MCF 10A (cell line): ENCODE measurements at regions of chr11 and their contacts with region 1.

Region 1: GRCh38 chr11:56841210-56841810 is 92.8 kb upstream of the OR9G4 start:
- DNase-seq: peak; percentile 78
- H3K4me3 Mint-ChIP-seq: no peak overlapping the region
- H3K27ac Mint-ChIP-seq: no peak overlapping the region
- H3K4me1 Mint-ChIP-seq: peaks cover 21% of the 10 kb centered on the region
- H3K27me3 Mint-ChIP-seq: no peaks in the 10 kb centered on the region
- CTCF ChIP-seq: peak; percentile 79

Region 2: GRCh38 chr11:57072640-57073039 is 231.3 kb after region 1 on chr11:
- CTCF ChIA-PET with region 1: interaction called, 9 read pairs
- POLR2A ChIA-PET with region 1: interaction called, 6 read pairs
- intact Hi-C with region 1: loop called (anchors 5 kb)
- DNase-seq: peak; percentile 96
- H3K4me3 Mint-ChIP-seq: no peak overlapping the region
- H3K27ac Mint-ChIP-seq: peak overlapping the region; percentile 94
- H3K4me1 Mint-ChIP-seq: peaks cover 26% of the 10 kb centered on the region
- H3K27me3 Mint-ChIP-seq: no peaks in the 10 kb centered on the region
- CTCF ChIP-seq: no peak

Region 3: DNA sequence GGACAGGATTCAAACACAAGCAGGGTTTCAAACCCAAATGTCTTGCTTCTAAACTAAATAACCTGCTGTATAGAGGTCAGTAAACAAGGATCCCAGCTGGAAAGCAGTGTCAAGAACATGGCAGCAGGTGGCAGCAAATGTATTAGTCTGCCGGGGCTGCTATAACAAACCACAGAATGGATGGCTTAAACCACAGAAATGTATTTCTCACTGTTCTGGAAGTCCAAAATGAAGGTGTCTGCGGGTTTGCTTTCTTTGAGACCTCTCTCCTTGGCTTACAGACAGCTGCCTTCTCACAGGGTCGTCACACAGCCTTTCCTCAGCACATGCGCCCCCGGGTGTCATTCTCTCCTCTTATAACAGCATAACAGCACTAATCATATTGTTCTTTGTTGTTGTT is 275.3 kb after region 1 on chr11:
- CTCF ChIA-PET with region 1: interaction called, 10 read pairs
- POLR2A ChIA-PET with region 1: no interaction called
- intact Hi-C with region 1: loop called (anchors 2 kb)
- DNase-seq: peak; percentile 58
- H3K4me3 Mint-ChIP-seq: no peak overlapping the region
- H3K27ac Mint-ChIP-seq: no peak overlapping the region
- H3K4me1 Mint-ChIP-seq: no peaks in the 10 kb centered on the region
- H3K27me3 Mint-ChIP-seq: no peaks in the 10 kb centered on the region
- CTCF ChIP-seq: peak; percentile 47

Region 4: GRCh38 chr11:57277845-57278709 is 436.8 kb after region 1 on chr11:
- CTCF ChIA-PET with region 1: interaction called, 22 read pairs
- POLR2A ChIA-PET with region 1: interaction called, 9 read pairs
- intact Hi-C with region 1: loop called (anchors 1 kb)
- DNase-seq: peak; percentile 86
- H3K4me3 Mint-ChIP-seq: peak overlapping the region; percentile 49
- H3K27ac Mint-ChIP-seq: peak overlapping the region; percentile 83
- H3K4me1 Mint-ChIP-seq: peaks cover 44% of the 10 kb centered on the region
- H3K27me3 Mint-ChIP-seq: no peaks in the 10 kb centered on the region
- CTCF ChIP-seq: peak; percentile 62